ENCODE measurements at regions of chr11 and their contacts with region 1.

Region 1: DNA sequence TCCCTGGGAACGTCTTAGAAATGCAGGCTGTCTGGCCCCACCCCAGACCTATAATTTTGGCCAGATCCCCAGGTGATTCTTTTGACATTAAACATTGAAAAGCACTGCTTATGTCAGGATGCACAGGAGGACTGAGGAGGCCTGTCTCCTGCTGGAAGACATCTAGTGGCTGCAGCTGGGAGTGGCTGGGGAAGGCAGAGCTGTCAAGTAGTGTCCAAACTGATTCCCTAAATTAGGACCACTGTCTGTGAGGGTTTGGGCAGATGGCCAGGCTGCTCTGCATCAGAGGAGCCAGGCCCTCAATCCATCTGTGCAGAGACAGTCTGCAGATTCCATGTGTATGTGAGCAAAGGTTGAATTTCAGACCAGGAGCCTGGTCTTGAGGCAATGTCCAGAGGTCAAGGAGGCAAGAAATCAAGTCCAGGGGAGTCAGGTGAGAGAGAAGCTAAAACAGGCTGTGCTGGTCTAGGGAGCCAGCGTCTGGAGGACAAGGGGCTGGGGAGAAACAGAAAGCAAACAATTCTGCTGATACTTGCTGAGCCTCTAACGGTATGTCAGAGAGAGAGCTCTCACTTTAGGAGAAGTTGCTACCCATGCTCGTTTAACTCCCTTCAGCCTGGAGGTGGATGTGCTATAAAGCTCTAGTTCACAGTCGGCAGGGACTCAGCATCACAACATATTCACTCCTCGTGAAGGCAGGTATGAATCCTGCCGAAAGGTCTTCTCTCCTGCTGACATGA is 15.3 kb upstream of the SYTL2 start:
- DNase-seq: no peak
- ATAC-seq: peak; percentile 47
- H3K4me3 ChIP-seq: no peak overlapping the region
- H3K27ac ChIP-seq: peak overlapping the region; percentile 95
- H3K4me1 ChIP-seq: peaks cover 55% of the 10 kb centered on the region
- H3K27me3 ChIP-seq: no peaks in the 10 kb centered on the region
- CTCF ChIP-seq: peak; percentile 86

Region 2: DNA sequence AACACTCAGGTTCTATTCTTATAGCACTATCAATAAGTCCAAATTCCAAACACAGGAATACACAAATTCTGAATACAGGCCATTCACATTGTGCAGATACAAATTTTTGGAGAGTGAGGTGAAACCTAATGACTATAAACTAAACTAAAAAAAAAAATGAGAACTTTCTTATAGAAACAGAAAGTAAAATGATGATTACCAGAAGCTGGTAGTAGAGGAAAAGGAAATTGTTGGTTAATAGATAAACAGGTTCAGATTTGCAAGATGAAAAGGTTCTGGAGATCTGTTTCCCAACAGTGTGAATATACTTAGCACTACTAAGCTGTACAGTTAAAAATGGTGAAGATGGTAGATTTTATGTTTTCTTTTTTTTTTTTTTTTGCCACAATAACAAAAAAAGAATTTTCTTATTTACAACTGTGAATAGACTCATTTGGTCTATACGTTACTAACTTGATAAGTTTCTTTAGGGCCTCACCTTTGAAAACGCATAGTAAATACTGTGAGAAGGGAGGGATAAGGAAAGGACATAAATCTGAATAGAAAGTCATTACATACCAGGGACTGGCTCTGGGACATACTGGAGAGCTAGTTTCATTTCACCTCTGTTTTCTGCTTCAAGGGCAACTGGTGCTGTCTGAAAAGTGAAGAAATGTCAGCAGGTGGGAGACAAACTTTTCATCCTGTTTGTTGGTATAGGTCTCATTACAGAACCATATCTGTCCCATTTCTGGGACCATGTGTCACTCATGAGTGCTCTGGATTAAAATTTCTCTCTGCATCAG is 126.1 kb before region 1 on chr11:
- CTCF ChIA-PET with region 1: no interaction called
- POLR2A ChIA-PET with region 1: no interaction called
- in situ Hi-C with region 1: no loop called
- intact Hi-C with region 1: loop called (anchors 5 kb)
- DNase-seq: no peak
- ATAC-seq: no peak
- H3K4me3 ChIP-seq: no peak overlapping the region
- H3K27ac ChIP-seq: no peak overlapping the region; the same call in 1 of the 2 replicates
- H3K4me1 ChIP-seq: peaks cover 6% of the 10 kb centered on the region
- H3K27me3 ChIP-seq: no peaks in the 10 kb centered on the region
- CTCF ChIP-seq: no peak

Region 3: DNA sequence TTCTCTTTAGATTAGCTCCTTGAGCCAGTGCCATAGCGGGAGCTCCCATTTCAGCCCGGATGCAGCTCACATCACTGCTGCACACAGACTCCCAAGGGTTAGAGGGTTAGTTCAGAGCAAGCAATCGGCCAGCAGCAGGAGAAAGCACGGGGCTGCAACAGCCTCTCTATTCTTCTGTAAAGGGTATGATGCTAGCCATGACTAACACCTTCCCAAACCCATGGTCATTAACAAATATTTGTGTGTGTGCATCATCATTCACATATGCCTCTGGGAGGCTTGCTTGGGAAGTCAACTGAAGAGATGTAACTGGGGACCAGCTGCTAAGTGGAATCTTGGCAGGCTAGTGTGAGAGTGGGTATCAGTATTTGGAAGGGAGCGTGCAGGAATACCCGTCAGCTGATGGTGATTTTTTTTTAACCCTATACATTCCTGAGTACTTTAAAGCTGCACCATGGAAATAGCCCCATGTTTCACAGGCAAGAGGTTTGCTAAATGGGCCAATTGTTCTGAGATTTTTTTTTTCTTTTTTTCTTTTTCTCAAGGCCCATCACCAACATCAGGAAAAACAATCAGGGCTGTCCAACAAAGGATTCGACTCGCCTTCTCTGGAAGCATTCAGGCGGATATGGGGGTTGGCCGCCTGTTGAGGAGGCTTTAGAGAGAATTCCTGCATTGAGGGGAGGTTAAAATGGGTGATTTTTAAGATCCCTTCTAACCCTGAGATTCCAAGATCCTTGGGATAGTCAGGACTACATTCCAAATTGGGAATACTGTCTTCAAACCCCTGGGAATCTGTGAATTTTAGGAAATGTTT is 107.1 kb before region 1 on chr11:
- CTCF ChIA-PET with region 1: no interaction called
- POLR2A ChIA-PET with region 1: interaction called, 4 read pairs
- in situ Hi-C with region 1: no loop called
- intact Hi-C with region 1: loop called (anchors 5 kb)
- DNase-seq: peak; percentile 98
- ATAC-seq: peak; percentile 95
- H3K4me3 ChIP-seq: peak overlapping the region; percentile 41 to 56
- H3K27ac ChIP-seq: peak overlapping the region; percentile 98
- H3K4me1 ChIP-seq: peaks cover 53% of the 10 kb centered on the region
- H3K27me3 ChIP-seq: no peaks in the 10 kb centered on the region
- CTCF ChIP-seq: no peak

Region 4: GRCh38 chr11:85810871-85811611 is 15.2 kb before region 1 on chr11 and contains the start of gene SYTL2:
- CTCF ChIA-PET with region 1: interaction called, 10 read pairs
- POLR2A ChIA-PET with region 1: interaction called, 4 read pairs
- in situ Hi-C with region 1: no loop called
- intact Hi-C with region 1: no loop called
- DNase-seq: no peak
- ATAC-seq: peak; percentile 96
- H3K4me3 ChIP-seq: peak within 1 kb of the TSS; percentile 67 to 68
- H3K27ac ChIP-seq: peak within 1 kb of the TSS; percentile 87
- H3K4me1 ChIP-seq: peaks cover 37% of the 10 kb centered on the region
- H3K27me3 ChIP-seq: no peaks in the 10 kb centered on the region
- CTCF ChIP-seq: peak; percentile 39; the same call in 1 of the 2 replicates
- total RNA-seq, gene SYTL2: 132 TPM

Region 5: GRCh38 chr11:86003654-86004053 is 177.4 kb after region 1 on chr11:
- CTCF ChIA-PET with region 1: no interaction called
- POLR2A ChIA-PET with region 1: no interaction called
- in situ Hi-C with region 1: no loop called
- intact Hi-C with region 1: no loop called
- DNase-seq: no peak
- ATAC-seq: no peak
- H3K4me3 ChIP-seq: no peak overlapping the region
- H3K27ac ChIP-seq: no peak overlapping the region
- H3K4me1 ChIP-seq: no peaks in the 10 kb centered on the region
- H3K27me3 ChIP-seq: no peaks in the 10 kb centered on the region
- CTCF ChIP-seq: no peak

Measured in Panc1 (cell line).